ENCODE measurements at regions of chr5 and their contacts with region 1.

Region 1: GRCh38 chr5:55691265-55692105 is 20.6 kb downstream of the SLC38A9 start:
- DNase-seq: no peak
- ATAC-seq: peak; percentile 85
- H3K4me3 ChIP-seq: peak overlapping the region in 1 of 2 donors; percentile 8
- H3K27ac ChIP-seq: no peak overlapping the region
- H3K4me1 ChIP-seq: no peaks in the 10 kb centered on the region
- H3K27me3 ChIP-seq: no peaks in the 10 kb centered on the region

Region 2: GRCh38 chr5:55324815-55325418 is 366.6 kb before region 1 on chr5:
- intact Hi-C with region 1: loop called (anchors 5 kb)
- DNase-seq: no peak
- ATAC-seq: peak; percentile 62
- H3K4me3 ChIP-seq: no peak overlapping the region
- H3K27ac ChIP-seq: no peak overlapping the region
- H3K4me1 ChIP-seq: peaks cover 0 to 2% of the 10 kb centered on the region in 2 donors
- H3K27me3 ChIP-seq: no peaks in the 10 kb centered on the region

Region 3: DNA sequence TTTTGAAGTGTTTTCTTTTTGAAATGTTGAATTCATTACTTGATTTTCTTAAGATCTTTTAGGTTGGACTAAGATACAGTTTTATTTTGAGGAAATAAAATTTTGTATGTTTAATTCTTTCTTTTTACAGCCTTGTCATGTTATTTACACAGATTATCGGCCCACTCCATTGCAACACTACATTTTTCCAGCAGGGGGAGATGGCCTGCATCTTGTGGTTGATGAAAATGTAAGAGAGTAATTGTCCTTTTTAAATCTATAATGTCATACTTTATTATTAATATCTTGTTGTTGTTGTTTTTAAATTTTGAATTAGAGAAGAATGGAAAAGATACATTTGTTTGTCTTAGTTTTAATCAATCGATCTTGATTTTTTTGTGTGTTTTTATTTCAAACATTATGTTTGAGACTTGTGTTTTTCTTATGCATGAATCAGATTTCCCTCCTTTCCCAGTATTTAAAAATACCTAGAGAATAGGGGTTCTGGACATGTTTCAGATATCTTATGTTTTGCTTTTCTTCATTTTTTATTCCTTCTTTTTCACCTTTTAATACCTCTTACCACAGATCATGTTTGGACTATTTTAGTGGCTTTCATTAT is 347.0 kb before region 1 on chr5:
- intact Hi-C with region 1: loop called (anchors 5 kb)
- DNase-seq: no peak
- ATAC-seq: no peak
- H3K4me3 ChIP-seq: no peak overlapping the region
- H3K27ac ChIP-seq: peak overlapping the region in 1 of 2 donors; percentile 67
- H3K4me1 ChIP-seq: peaks cover 0 to 2% of the 10 kb centered on the region in 2 donors
- H3K27me3 ChIP-seq: no peaks in the 10 kb centered on the region

Region 4: DNA sequence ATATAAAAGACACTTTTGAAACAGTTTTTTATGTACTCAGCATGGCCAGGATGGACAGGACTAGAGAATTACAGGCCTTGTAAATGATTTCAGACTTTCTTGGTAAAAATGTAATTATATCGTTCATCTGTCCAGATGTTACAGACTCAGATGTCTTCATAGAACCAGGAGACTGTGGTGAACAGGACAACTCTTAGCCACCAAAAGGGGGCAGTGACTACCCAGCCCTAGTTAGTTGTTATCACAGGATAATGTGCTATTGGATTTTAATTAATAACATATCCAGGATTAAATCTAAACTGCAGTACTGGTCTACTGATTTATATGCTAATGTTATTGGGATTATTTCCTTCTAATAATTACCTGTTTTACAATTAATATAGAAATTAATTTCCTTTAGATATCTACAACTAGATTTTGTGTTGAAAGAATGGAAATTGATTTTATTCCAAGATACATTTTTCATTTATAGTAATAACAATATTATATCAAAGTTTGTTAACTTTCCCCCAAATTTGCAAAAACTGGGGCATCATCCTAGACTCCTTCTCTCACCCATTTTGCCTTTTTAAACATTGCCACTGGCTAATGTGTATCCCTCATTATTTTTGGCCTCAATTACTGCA is 284.3 kb before region 1 on chr5:
- intact Hi-C with region 1: loop called (anchors 2 kb)
- DNase-seq: no peak
- ATAC-seq: peak; percentile 79
- H3K4me3 ChIP-seq: no peak overlapping the region
- H3K27ac ChIP-seq: no peak overlapping the region
- H3K4me1 ChIP-seq: no peaks in the 10 kb centered on the region
- H3K27me3 ChIP-seq: no peaks in the 10 kb centered on the region

Region 5: DNA sequence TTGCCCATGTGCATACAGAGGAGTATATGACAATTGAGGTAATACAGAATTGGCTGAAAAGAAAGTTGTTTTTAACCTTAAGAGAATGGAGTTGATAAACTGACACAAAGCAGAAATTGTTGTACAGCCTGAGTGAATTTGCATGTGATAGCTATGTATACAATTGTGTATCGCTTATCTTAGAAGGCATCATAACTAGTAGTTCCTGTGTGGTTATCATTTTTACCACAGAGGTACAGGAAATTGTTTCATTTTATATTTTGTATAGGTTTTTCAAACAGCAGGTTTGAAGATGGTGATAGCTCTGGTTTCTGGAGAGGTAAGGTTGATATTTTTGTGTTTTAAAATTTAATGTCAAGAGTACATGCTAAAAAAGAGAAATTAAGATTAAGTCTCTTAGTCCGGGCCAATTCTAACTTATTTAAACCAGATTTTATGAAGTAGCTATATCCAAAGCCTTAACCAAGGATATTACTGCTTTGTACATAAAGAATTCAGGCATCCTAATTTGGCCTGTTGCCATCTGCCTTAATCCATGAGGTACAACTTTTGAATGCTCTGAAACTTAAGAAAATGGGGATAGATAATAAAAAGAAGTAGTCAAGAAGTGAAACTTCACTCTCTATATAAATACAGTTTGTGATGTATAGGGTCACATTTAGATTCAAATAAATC is 72.4 kb after region 1 on chr5:
- intact Hi-C with region 1: no loop called
- DNase-seq: no peak
- ATAC-seq: no peak
- H3K4me3 ChIP-seq: no peak overlapping the region
- H3K27ac ChIP-seq: no peak overlapping the region
- H3K4me1 ChIP-seq: no peaks in the 10 kb centered on the region
- H3K27me3 ChIP-seq: no peaks in the 10 kb centered on the region

Measured in aorta (tissue), 5 donors.